Activated B cell treated with CpG ODN at 0.5 μM for 24 hours (primary cell): ENCODE measurements at regions of chrX and their contacts with region 1.

Region 1: DNA sequence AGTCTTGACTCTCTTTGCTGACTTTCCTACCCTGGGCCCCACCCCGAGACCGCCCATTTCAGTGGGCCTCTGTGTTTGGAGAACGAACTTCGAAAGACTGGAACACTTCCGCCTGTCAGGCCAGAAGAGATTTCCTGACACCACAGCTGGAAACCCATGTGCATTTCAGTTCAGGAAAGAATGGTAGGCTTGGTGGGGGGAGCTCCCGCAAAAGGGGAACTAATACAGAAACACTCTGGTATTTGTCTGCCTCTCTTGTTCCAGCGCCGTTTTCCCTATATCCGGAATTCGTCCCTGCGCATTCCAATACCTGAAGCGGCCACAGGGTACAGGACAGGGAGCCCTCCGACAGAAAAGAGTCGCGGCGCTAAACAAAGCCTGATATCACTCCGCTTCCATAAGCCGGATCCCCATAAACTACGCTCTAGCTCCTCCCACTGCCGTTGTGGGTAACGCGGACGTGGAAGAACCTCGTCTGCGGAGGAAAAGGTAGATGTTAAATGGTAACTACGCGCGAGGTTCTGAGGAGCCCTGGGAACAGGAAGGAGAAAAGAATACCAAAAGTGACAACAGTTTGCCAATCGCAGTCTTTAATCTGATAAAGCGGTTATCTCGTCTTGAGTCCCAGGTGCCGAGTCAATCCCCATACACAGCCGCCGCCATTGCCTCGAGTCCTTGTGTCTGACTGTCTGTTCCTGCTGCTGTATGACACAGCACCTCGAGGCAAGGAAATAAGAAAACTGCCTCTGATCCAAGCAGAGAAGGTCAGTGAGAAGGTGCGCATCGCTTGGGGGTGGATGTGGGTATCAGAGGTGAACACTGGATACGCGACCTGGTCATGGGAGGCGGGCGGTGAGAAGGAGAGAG is at the start of gene ARMCX5:
- DNase-seq: peak; percentile 31
- ATAC-seq: peak; percentile 86
- H3K4me3 Mint-ChIP-seq: peak within 1 kb of the TSS; percentile 96
- H3K27ac Mint-ChIP-seq: peak within 1 kb of the TSS; percentile 94
- H3K4me1 Mint-ChIP-seq: peaks cover 28% of the 10 kb centered on the region
- H3K27me3 Mint-ChIP-seq: no peaks in the 10 kb centered on the region
- CTCF ChIP-seq: no peak
- total RNA-seq, gene ARMCX5: 12.0 and 12.4 TPM in 2 replicates

Region 2: DNA sequence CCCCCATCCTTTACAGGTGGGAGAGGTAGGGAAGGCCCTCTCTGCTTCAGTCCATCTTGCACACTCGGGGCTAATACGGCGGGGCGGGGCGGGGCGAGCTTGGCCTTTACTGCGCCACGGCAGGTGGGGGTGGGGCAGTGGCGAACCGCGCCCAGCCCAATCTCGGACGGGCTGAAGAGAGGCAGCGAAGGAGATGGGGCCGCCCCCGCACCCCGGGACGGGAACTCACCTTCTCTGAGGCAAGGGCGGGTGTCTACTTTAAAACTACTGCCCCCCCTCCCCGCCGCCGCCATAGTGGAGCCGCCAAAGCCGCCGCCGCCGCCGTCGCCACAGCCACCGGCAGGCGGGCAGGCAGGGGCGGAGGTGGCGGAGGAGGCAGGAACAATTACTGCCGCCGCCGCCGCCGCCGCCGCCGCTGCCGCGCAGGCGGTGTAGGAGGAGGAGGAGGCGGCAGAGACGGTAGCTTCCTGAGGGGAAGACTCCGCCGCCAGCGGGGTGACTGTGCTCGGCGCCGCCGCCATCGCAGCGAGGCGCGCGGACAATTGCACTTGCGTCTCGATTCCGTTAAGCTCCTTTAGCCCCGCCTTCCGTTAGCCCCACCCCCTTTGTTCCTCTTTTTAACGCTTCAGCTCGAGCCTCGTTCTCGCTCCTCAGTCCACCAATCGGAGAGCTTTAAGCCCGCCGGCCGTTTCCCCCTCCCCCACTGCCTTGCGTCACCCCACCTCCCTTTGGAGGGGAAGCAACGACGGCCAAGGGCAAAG is 667.6 kb before region 1 on chrX and contains the start of gene ZMAT1:
- CTCF ChIA-PET with region 1: no interaction called
- POLR2A ChIA-PET with region 1: interaction called, 5 read pairs
- intact Hi-C with region 1: loop called (anchors 5 kb)
- DNase-seq: peak; percentile 74
- ATAC-seq: peak; percentile 85
- H3K4me3 Mint-ChIP-seq: peak within 1 kb of the TSS; percentile 87
- H3K27ac Mint-ChIP-seq: peak within 1 kb of the TSS; percentile 93
- H3K4me1 Mint-ChIP-seq: peaks cover 12% of the 10 kb centered on the region
- H3K27me3 Mint-ChIP-seq: no peaks in the 10 kb centered on the region
- CTCF ChIP-seq: no peak
- total RNA-seq, gene ZMAT1: 14.8 and 19.8 TPM in 2 replicates

Region 3: GRCh38 chrX:102610905-102611304 is 11.6 kb after region 1 on chrX:
- CTCF ChIA-PET with region 1: no interaction called
- POLR2A ChIA-PET with region 1: no interaction called
- intact Hi-C with region 1: no loop called
- DNase-seq: no peak
- ATAC-seq: no peak
- H3K4me3 Mint-ChIP-seq: no peak overlapping the region
- H3K27ac Mint-ChIP-seq: no peak overlapping the region
- H3K4me1 Mint-ChIP-seq: peaks cover 14% of the 10 kb centered on the region
- H3K27me3 Mint-ChIP-seq: no peaks in the 10 kb centered on the region
- CTCF ChIP-seq: no peak

Region 4: DNA sequence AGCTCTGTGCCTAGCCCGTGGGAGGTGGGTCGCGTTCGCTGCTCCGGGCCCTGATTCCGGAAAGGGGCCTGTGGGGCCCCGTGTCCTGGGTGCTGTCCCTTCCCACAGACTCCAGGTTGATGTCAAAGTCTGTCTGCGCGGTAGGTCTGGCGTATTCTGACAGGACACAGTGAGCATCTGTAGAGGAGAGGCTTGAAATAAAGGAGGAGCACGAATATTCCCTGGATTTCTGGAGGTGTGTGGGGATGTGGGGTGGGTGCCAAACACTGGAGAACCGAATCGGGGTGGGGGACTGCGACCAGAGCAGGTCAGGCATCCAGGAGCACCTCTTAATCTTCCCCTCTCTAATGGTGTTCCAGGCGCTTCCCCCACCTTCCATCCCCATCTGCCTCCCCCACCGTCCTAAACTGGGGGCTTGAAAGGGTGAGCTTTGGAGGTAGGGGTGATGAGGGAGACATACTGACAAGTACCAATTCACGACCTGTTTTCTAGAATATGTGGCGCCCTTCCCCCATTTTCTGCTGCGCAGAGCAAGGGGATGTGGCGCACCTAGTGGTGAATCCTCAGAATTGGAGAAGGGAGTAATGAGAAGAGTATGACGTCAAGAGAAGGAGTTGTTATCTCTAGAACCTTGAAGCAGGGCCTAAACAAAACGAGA is 52.8 kb after region 1 on chrX:
- CTCF ChIA-PET with region 1: no interaction called
- POLR2A ChIA-PET with region 1: no interaction called
- intact Hi-C with region 1: loop called (anchors 1 kb)
- DNase-seq: no peak
- ATAC-seq: peak; percentile 63
- H3K4me3 Mint-ChIP-seq: peak overlapping the region; percentile 95
- H3K27ac Mint-ChIP-seq: peak overlapping the region; percentile 68
- H3K4me1 Mint-ChIP-seq: peaks cover 15% of the 10 kb centered on the region
- H3K27me3 Mint-ChIP-seq: no peaks in the 10 kb centered on the region
- CTCF ChIP-seq: no peak

Region 5: GRCh38 chrX:102659790-102660757 is 60.8 kb after region 1 on chrX:
- CTCF ChIA-PET with region 1: no interaction called
- POLR2A ChIA-PET with region 1: interaction called, 6 read pairs
- intact Hi-C with region 1: loop called (anchors 2 kb)
- DNase-seq: peak; percentile 70
- ATAC-seq: peak; percentile 95
- H3K4me3 Mint-ChIP-seq: peak overlapping the region; percentile 92
- H3K27ac Mint-ChIP-seq: peak overlapping the region; percentile 92
- H3K4me1 Mint-ChIP-seq: peaks cover 17% of the 10 kb centered on the region
- H3K27me3 Mint-ChIP-seq: no peaks in the 10 kb centered on the region
- CTCF ChIP-seq: no peak

Region 6: DNA sequence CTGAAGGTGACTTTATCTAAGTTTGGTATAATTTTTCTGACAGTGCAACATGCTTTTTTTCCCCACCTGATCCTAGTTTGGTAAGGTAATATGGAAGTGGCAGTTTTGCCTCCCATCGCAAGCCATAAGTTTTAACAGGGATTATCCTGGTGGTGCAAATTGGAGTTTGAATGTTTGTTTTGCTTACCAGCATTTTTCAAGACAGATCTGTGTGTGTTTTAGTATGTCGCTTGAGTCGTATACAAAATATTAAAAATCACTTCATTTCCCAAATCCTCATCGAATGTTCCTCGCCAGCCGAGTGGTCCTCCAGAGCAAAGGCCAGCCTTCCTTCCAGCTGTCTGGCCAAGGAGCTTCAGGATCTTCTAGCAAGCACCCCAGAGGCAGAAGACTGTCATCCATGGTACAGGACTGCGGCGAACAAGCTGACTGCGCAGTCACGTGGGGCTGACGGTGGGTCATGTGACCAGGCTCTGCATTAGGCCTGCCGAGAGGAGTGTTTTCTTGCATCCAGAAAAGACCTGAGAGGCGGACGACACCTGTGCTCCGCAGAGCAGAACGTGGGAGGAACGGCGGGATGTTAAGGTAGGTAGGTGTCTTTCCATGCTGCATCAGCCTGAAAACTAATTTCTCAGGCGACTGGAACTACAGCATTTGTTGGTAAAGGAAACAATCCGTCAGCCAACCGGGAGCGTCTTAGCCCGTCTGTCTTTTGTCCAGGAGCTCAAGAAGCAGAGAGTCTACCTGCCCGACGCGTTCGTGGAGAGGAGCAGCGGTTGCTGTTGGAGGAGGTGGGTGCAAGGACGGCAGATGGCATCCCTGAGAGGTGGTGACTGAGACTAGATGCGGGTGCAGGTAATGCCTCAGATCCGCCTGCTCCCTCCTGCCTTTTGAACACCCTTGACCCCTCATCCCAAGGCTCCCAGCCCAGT is 121.2 kb after region 1 on chrX and contains the start of gene GPRASP3:
- CTCF ChIA-PET with region 1: no interaction called
- POLR2A ChIA-PET with region 1: interaction called, 3 read pairs
- intact Hi-C with region 1: loop called (anchors 1 kb)
- DNase-seq: peak; percentile 37
- ATAC-seq: peak; percentile 85
- H3K4me3 Mint-ChIP-seq: peak within 1 kb of the TSS; percentile 88
- H3K27ac Mint-ChIP-seq: peak within 1 kb of the TSS; percentile 35
- H3K4me1 Mint-ChIP-seq: peaks cover 12% of the 10 kb centered on the region
- H3K27me3 Mint-ChIP-seq: no peaks in the 10 kb centered on the region
- CTCF ChIP-seq: no peak
- total RNA-seq, gene GPRASP3: 1.3 TPM in 2 replicates